ENCODE measurements at regions of chr9 and their contacts with region 1.

Region 1: DNA sequence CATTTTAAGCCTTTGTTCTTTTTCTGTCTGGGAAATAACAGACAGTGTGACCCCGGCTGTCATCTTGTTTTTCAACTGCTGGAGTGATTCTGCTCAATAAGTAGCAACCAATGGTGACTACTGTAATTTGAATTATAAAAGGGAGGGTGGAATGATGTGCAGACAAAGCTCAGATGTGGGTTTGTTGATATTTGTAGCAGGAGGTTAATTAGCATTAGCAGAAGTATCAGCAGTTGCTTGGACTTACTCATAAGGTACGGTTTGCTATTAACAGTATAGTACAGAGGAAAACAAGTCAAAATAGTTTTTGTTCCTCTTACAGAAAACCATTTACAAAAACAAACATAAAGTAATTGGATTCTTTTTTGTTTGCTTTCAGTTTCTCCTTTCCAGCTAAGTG is 140.4 kb downstream of the TUSC1 start:
- DNase-seq: no peak
- ATAC-seq: no peak
- H3K4me3 ChIP-seq: no peak overlapping the region
- H3K27ac ChIP-seq: no peak overlapping the region
- H3K4me1 ChIP-seq: no peaks in the 10 kb centered on the region
- H3K27me3 ChIP-seq: no peaks in the 10 kb centered on the region
- CTCF ChIP-seq: no peak
- POLR2A ChIP-seq: no peak

Region 2: GRCh38 chr9:26292943-26293342 is 755.1 kb after region 1 on chr9:
- intact Hi-C with region 1: loop called in 1 of 2 experiments (anchors 10 kb)
- DNase-seq: no peak
- ATAC-seq: no peak
- H3K4me3 ChIP-seq: no peak overlapping the region
- H3K27ac ChIP-seq: no peak overlapping the region
- H3K4me1 ChIP-seq: no peaks in the 10 kb centered on the region
- H3K27me3 ChIP-seq: no peaks in the 10 kb centered on the region
- CTCF ChIP-seq: no peak
- POLR2A ChIP-seq: no peak